ENCODE measurements at regions of chr4 and their contacts with region 1.

Region 1: DNA sequence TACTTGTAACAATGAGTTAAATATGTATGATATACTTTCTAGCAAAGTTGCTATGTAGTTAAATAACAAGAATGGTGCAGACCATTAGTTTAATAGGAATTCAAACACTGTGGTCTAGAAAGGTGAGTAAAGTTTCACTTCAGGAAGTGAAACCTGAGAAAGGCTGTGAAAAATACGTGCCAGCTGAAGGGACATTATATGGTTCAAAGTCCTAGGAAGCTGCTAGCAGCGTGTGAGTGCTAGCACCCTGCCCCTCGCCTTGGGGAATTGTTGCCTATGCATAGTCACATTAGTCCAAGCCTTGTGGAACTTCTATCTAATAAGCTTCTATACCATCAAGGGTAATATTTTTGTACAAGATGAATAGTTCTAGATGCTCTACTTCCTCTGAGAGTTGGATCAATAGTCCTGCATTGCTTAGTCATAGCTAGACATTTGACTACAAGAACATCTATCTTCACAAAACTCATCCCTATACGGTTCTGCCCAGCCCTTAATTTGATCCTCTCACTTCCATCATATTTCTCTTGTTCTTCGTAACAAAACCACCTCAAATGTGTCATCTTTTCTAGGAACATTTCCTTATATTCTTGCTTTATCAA is 45.8 kb upstream of the ARSJ start:
- DNase-seq: no peak
- H3K4me3 ChIP-seq: no peak overlapping the region
- CTCF ChIP-seq: no peak

Region 2: DNA sequence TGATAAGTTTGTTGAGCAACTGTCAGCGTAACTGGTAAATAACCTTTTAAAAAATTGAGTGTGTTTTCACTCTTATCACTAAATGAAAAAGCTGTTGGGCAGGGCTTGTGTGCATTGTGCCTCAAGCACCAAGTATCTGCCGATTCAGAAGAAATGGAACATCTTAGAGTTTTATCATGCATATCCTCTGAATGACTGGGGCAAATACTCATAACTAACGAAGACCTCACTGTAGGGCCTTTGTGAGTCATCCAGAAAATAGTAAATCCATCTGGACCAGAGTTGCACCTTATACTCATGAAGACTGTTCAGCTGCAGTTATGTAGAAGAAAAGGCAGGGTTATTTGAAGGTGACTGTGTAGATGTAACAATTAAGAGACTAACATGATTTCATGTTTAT is 485.9 kb before region 1 on chr4:
- in situ Hi-C with region 1: no loop called
- DNase-seq: peak; percentile 11
- H3K4me3 ChIP-seq: no peak overlapping the region
- CTCF ChIP-seq: no peak

Region 3: DNA sequence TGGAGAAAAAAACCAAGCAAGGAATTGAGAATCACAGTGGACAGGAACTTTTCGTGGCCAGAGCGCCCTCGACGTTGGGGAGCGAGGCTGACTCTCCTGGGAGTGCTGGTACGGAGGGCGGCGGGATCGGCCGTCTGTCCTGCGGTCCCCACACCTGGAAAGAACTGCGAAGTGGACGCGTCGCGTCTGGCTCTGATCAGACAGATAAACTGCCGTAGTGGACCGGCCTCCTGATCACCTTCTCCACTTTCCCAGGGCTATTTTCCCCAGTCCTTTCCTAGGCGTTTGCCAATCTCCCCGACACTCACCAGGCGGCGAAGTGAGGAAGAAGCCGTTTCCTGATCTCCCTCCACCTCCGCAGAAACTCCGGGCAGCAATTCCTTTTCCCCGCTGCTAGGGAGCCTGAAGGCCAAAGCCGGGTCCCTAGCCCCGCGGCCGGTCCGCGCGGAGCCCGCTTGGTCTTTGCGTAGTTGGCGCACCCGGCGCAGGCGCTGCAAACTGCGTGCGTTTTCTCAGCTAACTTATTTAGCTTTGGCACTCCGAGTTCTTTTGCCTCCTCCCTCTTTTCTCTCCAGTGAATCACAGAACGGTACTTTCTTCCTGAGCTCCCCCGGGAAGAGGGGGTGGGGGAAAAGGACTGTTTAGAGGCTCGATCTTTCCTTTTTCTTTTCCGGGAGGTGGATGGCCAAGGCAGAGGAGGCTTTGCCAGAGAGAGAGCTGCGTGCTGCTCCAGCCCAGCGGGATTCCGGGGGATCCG is 46.0 kb before region 1 on chr4 and contains the start of gene ARSJ:
- in situ Hi-C with region 1: no loop called
- DNase-seq: peak; percentile 74
- H3K4me3 ChIP-seq: peak within 1 kb of the TSS; percentile 81
- CTCF ChIP-seq: peak; percentile 23

Region 4: GRCh38 chr4:114072781-114073180 is 47.5 kb after region 1 on chr4:
- in situ Hi-C with region 1: loop called (anchors 5 kb)
- DNase-seq: no peak
- H3K4me3 ChIP-seq: no peak overlapping the region
- CTCF ChIP-seq: no peak